ENCODE measurements at regions of chr7 and their contacts with region 1.

Region 1: DNA sequence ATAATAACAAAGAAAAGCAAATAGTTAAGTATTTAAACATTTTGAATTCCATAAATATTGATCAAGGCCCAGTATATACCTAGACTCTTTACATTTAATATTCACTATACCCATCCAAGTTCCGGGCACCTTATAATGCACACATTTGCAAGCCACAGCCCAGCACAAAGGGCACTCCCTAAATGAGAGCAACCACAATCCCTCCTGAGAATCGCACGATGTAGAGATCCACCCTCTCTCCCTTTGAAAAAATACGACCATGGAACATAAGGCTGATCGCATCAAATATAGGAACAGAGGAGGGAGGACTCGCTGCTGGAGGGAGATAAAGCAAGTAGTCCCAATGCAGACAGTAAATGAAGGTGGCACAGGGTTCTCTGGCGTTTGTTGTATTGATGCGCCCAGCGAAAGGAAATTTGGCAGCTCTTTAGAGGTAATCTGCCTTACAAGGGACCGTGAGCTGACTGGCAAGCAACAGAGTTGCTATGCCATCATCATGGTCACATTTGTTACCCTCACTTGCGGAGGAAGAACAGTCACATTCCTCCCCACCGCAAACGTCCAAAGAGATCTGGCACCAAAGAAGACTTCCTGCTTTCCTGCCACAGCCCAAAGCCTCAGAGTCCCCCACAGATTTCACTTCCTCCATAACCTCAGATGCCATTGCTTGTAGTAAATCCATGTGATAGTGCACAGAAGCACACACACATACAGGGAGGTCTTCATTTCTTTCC is 16.1 kb upstream of the TAS2R40 start:
- DNase-seq: peak; percentile 37
- ATAC-seq: peak; percentile 60
- H3K4me3 Mint-ChIP-seq: no peak overlapping the region
- H3K27ac Mint-ChIP-seq: no peak overlapping the region
- H3K4me1 Mint-ChIP-seq: peaks cover 9% of the 10 kb centered on the region
- H3K27me3 Mint-ChIP-seq: peaks cover 5% of the 10 kb centered on the region

Region 2: GRCh38 chr7:143193880-143194279 is 11.8 kb before region 1 on chr7:
- CTCF ChIA-PET with region 1: no interaction called
- POLR2A ChIA-PET with region 1: no interaction called
- intact Hi-C with region 1: loop called in 1 of 2 experiments (anchors 1 kb)
- DNase-seq: no peak
- ATAC-seq: no peak
- H3K4me3 Mint-ChIP-seq: no peak overlapping the region
- H3K27ac Mint-ChIP-seq: no peak overlapping the region
- H3K4me1 Mint-ChIP-seq: no peaks in the 10 kb centered on the region
- H3K27me3 Mint-ChIP-seq: peaks cover 5% of the 10 kb centered on the region